OCI-LY7 (cell line): ENCODE measurements at regions of chr1 and their contacts with region 1.

Region 1: DNA sequence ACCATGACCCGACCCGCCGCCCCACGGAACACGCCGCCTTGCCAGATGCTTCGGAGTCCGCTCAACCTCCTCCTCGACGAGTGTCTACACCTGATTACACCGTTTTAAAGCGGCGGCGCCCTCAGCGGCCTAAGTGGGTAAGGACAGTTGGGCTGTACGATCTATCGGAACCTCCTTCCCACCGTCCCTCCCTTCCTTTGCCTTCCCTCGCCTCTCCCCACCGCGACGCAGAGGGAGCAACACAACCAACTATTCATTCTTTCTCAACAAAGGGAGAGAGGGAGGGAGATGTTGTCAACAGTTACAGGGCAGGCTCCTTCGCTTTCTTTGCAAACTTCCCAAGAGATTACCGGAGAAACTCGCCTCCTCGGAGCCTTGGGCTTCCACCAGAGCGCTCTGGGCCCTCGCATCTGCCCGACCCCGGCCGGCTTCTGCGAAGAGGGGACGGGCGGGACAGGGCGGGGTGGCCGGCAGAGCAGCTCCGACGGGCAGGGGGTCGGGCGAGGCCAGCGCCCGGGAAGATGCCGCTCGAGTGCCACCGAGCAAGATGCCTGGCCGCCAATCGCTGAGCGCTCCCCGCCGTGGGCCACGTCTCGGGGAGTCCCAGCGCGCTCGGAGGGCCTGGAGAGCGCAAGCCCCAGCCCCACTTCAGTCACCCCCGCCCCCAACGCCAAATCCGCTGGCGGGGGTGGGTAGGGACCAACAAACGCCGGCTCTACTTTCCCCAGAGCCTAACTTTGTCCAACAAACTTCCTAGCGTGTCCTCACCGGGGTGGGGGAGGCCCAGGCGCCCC is 683 bp downstream of the BCAR3 start:
- DNase-seq: peak; percentile 88
- H3K4me3 ChIP-seq: peak overlapping the region; percentile 82
- H3K27ac ChIP-seq: peak overlapping the region; percentile 64
- H3K4me1 ChIP-seq: peaks cover 57% of the 10 kb centered on the region
- CTCF ChIP-seq: peak; percentile 78

Region 2: GRCh38 chr1:93493746-93494145 is 187.2 kb before region 1 on chr1:
- CTCF ChIA-PET with region 1: no interaction called
- POLR2A ChIA-PET with region 1: no interaction called
- intact Hi-C with region 1: no loop called
- DNase-seq: no peak
- H3K4me3 ChIP-seq: no peak overlapping the region
- H3K27ac ChIP-seq: no peak overlapping the region
- H3K4me1 ChIP-seq: no peaks in the 10 kb centered on the region
- CTCF ChIP-seq: no peak

Region 3: DNA sequence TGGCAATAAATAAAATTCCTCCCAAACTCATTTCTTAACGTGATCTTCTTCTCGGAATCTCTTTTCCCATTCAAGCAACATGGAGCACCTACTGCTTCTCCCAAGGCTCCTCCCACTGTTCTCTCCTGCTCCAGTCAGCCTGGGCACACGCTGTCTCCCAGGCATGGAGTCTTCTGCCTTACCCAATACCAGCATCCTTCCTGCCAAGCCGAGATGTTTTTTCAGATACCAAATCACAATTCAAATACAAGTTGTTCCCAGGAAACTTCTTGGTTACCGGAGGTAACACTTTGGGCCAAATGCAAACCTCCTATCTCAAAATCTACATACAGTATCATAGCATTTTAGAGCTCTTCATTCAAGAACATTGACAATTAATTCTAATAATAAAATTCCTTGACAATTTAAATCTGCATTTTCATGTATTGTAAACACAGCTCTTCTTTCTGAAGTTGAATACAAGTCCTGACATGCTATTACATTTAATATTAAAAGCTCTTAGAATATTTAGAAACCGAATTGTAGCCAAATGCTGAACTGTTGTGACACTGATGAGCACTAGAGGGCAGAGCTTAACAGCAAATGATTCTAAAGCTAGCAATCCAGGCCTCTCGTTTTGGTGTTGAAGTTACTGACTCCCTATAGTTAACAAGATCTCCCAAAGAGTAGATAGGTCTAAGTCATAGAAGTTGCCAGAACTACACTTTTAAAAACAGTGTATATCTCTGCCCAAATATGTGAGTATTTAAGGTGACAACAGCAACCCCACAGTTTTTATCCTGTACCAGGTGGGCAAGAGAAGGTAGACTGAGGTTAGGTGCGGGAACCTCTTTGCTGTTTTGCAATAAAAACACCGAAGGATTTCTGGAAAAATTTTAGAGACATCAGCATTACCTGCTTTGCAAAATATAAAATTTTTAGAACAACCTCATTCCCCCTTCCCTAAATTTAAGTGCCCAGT is 51.6 kb before region 1 on chr1:
- CTCF ChIA-PET with region 1: no interaction called
- POLR2A ChIA-PET with region 1: no interaction called
- intact Hi-C with region 1: loop called (anchors 1 kb)
- DNase-seq: peak; percentile 83
- H3K4me3 ChIP-seq: no peak overlapping the region
- H3K27ac ChIP-seq: no peak overlapping the region
- H3K4me1 ChIP-seq: peaks cover 5% of the 10 kb centered on the region
- CTCF ChIP-seq: peak; percentile 99

Region 4: GRCh38 chr1:93692983-93693591 is 12.1 kb after region 1 on chr1:
- CTCF ChIA-PET with region 1: interaction called, 7 read pairs
- POLR2A ChIA-PET with region 1: interaction called, 497 read pairs
- intact Hi-C with region 1: no loop called
- DNase-seq: peak; percentile 65
- H3K4me3 ChIP-seq: peak overlapping the region; percentile 7
- H3K27ac ChIP-seq: peak overlapping the region; percentile 80
- H3K4me1 ChIP-seq: peaks cover 84% of the 10 kb centered on the region
- CTCF ChIP-seq: no peak

Region 5: DNA sequence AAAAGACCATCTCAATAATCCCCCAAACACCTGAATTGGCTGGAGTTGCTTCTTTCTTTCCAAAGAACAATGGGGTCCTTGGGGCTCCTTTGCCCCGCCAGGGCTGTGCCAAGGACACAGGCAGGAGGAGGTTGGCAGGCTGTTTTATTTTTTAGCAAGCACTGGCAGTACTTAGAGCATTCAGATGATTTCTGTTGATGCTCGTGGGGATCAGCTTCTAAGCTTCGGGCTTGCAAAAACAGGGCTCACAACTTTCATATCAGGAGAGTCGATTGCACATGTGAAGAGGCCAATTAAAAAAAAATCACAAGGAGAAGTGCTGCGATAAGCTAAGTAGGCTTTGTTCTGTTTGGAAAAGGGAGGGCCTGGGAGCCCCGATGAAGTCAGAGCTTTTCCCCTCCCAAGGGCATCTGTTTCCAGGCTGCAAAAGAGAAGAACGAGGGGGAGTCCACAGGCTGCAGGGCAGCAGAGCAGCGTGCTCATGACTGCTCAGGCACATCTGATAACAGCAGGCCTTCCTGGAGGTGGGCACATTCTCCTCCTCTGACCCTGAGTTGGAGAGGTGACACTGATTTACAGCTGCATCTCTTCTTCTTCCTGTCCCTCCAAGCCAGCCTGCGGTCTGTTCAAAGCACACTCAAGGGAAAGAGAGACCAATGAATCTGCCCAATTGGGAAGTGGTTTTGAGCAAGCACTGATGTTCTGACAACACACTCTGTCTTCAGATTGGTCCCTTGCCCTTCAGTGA is 28.0 kb after region 1 on chr1:
- CTCF ChIA-PET with region 1: interaction called, 12 read pairs
- POLR2A ChIA-PET with region 1: interaction called, 497 read pairs
- intact Hi-C with region 1: loop called (anchors 1 kb)
- DNase-seq: peak; percentile 62
- H3K4me3 ChIP-seq: peak overlapping the region; percentile 51
- H3K27ac ChIP-seq: peak overlapping the region; percentile 98
- H3K4me1 ChIP-seq: peaks cover 95% of the 10 kb centered on the region
- CTCF ChIP-seq: no peak

Region 6: GRCh38 chr1:93734999-93735398 is 54.0 kb after region 1 on chr1:
- CTCF ChIA-PET with region 1: no interaction called
- POLR2A ChIA-PET with region 1: interaction called, 3 read pairs
- intact Hi-C with region 1: loop called (anchors 2 kb)
- DNase-seq: peak; percentile 45
- H3K4me3 ChIP-seq: no peak overlapping the region
- H3K27ac ChIP-seq: no peak overlapping the region
- H3K4me1 ChIP-seq: peaks cover 34% of the 10 kb centered on the region
- CTCF ChIP-seq: peak; percentile 76

Region 7: DNA sequence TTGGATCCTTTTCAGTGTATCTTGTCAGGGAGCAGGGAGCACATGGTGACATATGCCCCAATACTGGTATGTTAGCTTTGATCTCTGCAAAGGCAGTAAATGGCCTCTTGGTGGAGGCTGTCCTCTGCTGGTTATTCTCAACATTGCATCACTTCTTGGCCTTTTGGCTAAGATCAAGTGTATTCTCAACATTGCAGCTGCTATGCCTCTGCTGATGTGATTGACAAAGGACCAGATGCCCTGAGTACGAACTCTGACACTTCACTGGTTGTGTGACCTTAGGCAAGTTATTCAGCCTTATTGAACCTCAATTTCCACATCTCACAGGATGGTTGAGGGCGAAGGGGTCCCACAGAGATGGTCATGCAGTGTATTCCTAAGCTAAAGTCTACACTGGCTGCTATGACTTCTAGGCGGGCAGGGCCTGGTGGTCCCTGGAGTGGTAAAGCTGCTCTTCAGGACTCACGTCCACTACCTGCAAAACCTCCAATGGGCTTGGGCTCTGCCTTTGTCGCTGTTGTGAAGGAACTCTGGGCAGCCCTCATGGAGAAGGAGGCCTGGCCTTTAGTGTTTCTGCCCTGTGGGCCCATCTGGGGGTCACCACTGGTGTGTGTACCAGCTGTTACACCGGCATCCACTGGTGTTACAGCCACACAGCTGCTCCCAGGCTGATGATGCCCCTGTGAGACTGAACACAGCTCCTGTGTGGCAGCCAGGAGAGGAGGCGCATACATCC is 133.3 kb after region 1 on chr1:
- CTCF ChIA-PET with region 1: interaction called, 5 read pairs
- POLR2A ChIA-PET with region 1: interaction called, 6 read pairs
- intact Hi-C with region 1: loop called (anchors 2 kb)
- DNase-seq: peak; percentile 85
- H3K4me3 ChIP-seq: no peak overlapping the region
- H3K27ac ChIP-seq: no peak overlapping the region
- H3K4me1 ChIP-seq: peaks cover 33% of the 10 kb centered on the region
- CTCF ChIP-seq: peak; percentile 100